ENCODE measurements at regions of chr22 and their contacts with region 1.

Region 1: DNA sequence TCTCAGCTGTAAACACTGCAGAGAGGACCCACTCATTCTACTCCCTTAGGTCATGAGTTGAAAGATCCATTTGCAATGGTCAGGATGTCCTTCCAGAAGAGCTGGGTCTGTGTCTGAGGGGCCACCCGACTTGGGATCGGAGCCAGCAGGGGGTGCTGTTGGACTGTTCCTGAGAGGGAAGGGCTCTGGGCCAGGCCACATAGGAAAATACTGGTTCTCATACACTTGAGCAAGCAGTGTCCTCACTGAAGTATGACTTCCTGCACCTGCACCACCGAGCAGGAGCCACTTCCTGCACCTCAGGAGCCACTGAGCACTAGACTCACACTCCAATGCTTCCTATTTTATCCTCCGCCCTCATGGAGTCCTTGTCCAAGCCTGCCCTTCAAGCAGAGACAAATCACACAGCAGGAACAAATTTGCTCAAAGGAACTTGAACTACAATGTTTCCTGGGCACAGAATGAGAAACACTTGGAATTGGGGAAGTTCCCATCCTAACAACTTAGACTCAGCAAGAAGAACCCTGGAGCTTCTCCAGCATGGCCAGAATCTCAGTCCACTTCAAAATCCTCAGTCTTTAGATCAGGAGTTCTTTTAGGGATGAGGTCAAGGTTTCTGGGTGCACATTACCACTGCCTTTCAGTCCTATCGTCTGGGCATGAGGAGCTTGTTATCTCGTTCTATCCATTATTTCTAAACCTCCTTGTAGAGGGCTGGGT is 36.6 kb upstream of the VPREB1 start:
- DNase-seq: no peak
- H3K4me3 ChIP-seq: no peak overlapping the region
- CTCF ChIP-seq: peak; percentile 79

Region 2: GRCh38 chr22:22195265-22196017 is 12.6 kb before region 1 on chr22:
- CTCF ChIA-PET with region 1: interaction called, 62 read pairs
- POLR2A ChIA-PET with region 1: no interaction called
- DNase-seq: no peak
- H3K4me3 ChIP-seq: no peak overlapping the region
- CTCF ChIP-seq: peak; percentile 81

Region 3: DNA sequence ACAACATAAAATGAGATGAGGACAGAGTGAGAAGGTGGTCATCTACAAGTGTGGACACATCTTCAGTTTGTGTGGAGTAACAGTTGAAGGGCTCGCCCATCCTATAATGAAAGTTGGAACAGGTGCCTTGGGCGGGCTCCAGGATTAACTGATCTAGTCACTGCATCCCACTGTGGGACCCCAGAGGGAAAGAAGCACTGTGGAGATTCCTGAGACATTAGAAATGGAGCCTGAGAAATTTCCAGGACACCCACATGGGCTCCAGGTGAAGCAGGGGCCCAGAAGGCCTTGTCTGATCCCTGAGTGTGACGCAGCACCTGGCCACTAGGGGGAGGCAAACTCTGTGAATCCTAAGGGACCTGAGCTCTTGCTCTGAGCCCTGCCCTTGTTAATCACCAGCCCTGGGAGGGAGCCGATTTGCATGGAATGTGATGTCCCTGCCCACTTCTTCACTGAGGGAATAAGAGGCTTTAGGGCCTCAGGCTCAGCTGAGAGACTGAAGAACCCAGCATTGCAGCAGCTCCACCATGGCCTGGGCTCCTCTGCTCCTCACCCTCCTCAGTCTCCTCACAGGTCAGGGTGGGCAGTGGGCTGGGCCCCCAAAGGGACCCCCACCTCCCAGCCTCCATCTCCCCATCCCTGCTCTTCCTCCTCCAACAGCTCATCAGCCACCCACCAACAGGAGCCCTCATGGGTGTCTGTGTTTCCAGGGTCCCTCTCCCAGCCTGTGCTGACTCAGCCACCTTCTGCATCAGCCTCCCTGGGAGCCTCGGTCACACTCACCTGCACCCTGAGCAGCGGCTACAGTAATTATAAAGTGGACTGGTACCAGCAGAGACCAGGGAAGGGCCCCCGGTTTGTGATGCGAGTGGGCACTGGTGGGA is 134.9 kb after region 1 on chr22:
- CTCF ChIA-PET with region 1: interaction called, 15 read pairs
- POLR2A ChIA-PET with region 1: no interaction called
- DNase-seq: no peak
- H3K4me3 ChIP-seq: no peak overlapping the region
- CTCF ChIP-seq: peak; percentile 78

Region 4: GRCh38 chr22:22422629-22423112 is 214.7 kb after region 1 on chr22:
- CTCF ChIA-PET with region 1: interaction called, 17 read pairs
- POLR2A ChIA-PET with region 1: no interaction called
- DNase-seq: no peak
- H3K4me3 ChIP-seq: no peak overlapping the region
- CTCF ChIP-seq: peak; percentile 72

Region 5: GRCh38 chr22:22463855-22464540 is 256.0 kb after region 1 on chr22:
- CTCF ChIA-PET with region 1: interaction called, 13 read pairs
- POLR2A ChIA-PET with region 1: no interaction called
- DNase-seq: no peak
- H3K4me3 ChIP-seq: no peak overlapping the region
- CTCF ChIP-seq: peak; percentile 49

Measured in AG04449 (cell line).